Psoas muscle (tissue), 8 donors: ENCODE measurements at regions of chr5 and their contacts with region 1.

Region 1: DNA sequence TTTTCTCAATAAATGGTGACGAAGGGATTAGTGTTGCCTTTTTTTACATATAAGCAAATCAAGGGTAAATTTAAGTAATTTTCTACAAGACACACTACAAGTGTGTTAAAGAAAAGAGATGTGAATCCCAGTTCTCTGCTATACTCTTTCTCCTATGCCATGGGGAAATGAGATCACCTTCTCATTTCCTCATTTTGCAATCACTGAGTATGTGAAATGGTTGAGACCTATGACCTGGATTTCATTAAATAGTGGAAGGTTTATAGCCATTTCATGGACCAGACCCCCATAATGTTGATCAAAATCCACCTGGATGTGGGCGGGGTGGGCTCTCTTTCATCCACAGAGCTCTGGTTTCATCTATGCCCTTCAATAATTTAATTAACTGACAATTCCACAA is 66.9 kb upstream of the SLIT3 start:
- DNase-seq: no peak
- ATAC-seq: no peak
- H3K4me3 ChIP-seq: no peak overlapping the region
- H3K27ac ChIP-seq: no peak overlapping the region
- H3K4me1 ChIP-seq: no peaks in the 10 kb centered on the region
- H3K27me3 ChIP-seq: no peaks in the 10 kb centered on the region
- CTCF ChIP-seq: no peak

Region 2: GRCh38 chr5:169384661-169385060 is 16.8 kb after region 1 on chr5:
- intact Hi-C with region 1: loop called in 1 of 2 experiments (anchors 2 kb)
- DNase-seq: no peak
- ATAC-seq: no peak
- H3K4me3 ChIP-seq: no peak overlapping the region
- H3K27ac ChIP-seq: no peak overlapping the region
- H3K4me1 ChIP-seq: no peaks in the 10 kb centered on the region
- H3K27me3 ChIP-seq: no peaks in the 10 kb centered on the region
- CTCF ChIP-seq: no peak